ENCODE measurements at regions of chr5 and their contacts with region 1.

Region 1: GRCh38 chr5:122192497-122193496 is 63.5 kb downstream of the ZNF474 start:
- DNase-seq: peak in 1 of 5 donors; percentile 22
- ATAC-seq: peak in 3 of 4 donors; percentile 68 to 80 (median 75)
- H3K4me3 ChIP-seq: no peak overlapping the region
- H3K27ac ChIP-seq: no peak overlapping the region
- H3K4me1 ChIP-seq: peaks cover 0 to 8% (median 0%) of the 10 kb centered on the region in 12 donors
- H3K27me3 ChIP-seq: peaks cover 0 to 5% (median 0%) of the 10 kb centered on the region in 9 donors
- CTCF ChIP-seq: peak; percentile 45 to 74 (median 60)
- POLR2A ChIP-seq: no peak

Region 2: GRCh38 chr5:122415030-122415800 is 222.4 kb after region 1 on chr5:
- intact Hi-C with region 1: loop called (anchors 1 to 5 kb)
- DNase-seq: peak; percentile 32 to 49 (median 37)
- ATAC-seq: peak; percentile 88 to 98 (median 96)
- H3K4me3 ChIP-seq: no peak overlapping the region
- H3K27ac ChIP-seq: no peak overlapping the region
- H3K4me1 ChIP-seq: peaks cover 0 to 8% (median 0%) of the 10 kb centered on the region in 12 donors
- H3K27me3 ChIP-seq: no peaks in the 10 kb centered on the region
- CTCF ChIP-seq: peak; percentile 38 to 77 (median 60)
- POLR2A ChIP-seq: no peak

Region 3: DNA sequence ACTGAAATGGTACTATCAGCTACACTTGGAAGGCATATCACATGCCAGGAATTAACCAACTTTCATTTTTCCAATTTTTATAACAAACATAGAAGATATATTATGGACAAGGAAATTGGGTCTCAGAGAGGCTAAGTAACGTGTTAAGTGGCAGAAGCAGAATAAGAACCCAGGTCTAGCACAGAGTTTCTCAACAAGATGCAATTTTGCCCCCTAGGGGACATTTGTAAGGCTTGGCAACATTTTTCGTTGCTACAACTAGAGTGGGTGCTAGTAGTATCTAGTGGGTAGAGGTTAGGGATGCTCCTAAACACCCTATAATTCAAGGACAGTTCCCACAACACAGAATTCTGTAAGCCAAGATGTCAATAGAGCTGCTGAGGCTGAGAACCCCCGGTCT is 299.9 kb after region 1 on chr5:
- intact Hi-C with region 1: loop called in 6 of 10 experiments (anchors 5 to 10 kb)
- DNase-seq: no peak
- ATAC-seq: no peak
- H3K4me3 ChIP-seq: no peak overlapping the region
- H3K27ac ChIP-seq: peak overlapping the region in 2 of 12 donors; percentile 19 to 50
- H3K4me1 ChIP-seq: peaks cover 0 to 9% (median 0%) of the 10 kb centered on the region in 12 donors
- H3K27me3 ChIP-seq: no peaks in the 10 kb centered on the region
- CTCF ChIP-seq: peak in 3 of 12 donors; percentile 9 to 13 (median 9)
- POLR2A ChIP-seq: no peak

Region 4: GRCh38 chr5:122500245-122501075 is 307.7 kb after region 1 on chr5:
- intact Hi-C with region 1: loop called in 3 of 10 experiments (anchors 5 to 10 kb)
- DNase-seq: peak in 2 of 5 donors; percentile 27 to 33
- ATAC-seq: peak; percentile 35 to 81 (median 70)
- H3K4me3 ChIP-seq: peak overlapping the region in 2 of 12 donors; percentile 19
- H3K27ac ChIP-seq: peak overlapping the region in 6 of 12 donors; percentile 0 to 63 (median 42)
- H3K4me1 ChIP-seq: peaks cover 0 to 12% (median 0%) of the 10 kb centered on the region in 12 donors
- H3K27me3 ChIP-seq: no peaks in the 10 kb centered on the region
- CTCF ChIP-seq: peak; percentile 23 to 62 (median 42)
- POLR2A ChIP-seq: no peak

Measured in heart left ventricle (tissue), 16 donors.